ENCODE measurements at regions of chr13 and their contacts with region 1.

Region 1: GRCh38 chr13:99501184-99501847 is at the start of gene TM9SF2:
- DNase-seq: peak; percentile 94
- H3K4me3 ChIP-seq: peak within 1 kb of the TSS; percentile 78 to 93
- H3K27ac ChIP-seq: peak within 1 kb of the TSS; percentile 87 to 91
- H3K4me1 ChIP-seq: peaks cover 5% of the 10 kb centered on the region
- H3K27me3 ChIP-seq: no peaks in the 10 kb centered on the region
- CTCF ChIP-seq: no peak
- POLR2A ChIP-seq: peak; percentile 61
- total RNA-seq, gene TM9SF2: 136 to 175 TPM

Region 2: GRCh38 chr13:99442273-99442895 is 58.9 kb before region 1 on chr13:
- intact Hi-C with region 1: loop called (anchors 2 kb)
- DNase-seq: peak; percentile 40
- H3K4me3 ChIP-seq: no peak overlapping the region
- H3K27ac ChIP-seq: no peak overlapping the region
- H3K4me1 ChIP-seq: no peaks in the 10 kb centered on the region
- H3K27me3 ChIP-seq: peaks cover 2% of the 10 kb centered on the region
- CTCF ChIP-seq: peak; percentile 85 to 93 (median 88)
- POLR2A ChIP-seq: no peak

Region 3: DNA sequence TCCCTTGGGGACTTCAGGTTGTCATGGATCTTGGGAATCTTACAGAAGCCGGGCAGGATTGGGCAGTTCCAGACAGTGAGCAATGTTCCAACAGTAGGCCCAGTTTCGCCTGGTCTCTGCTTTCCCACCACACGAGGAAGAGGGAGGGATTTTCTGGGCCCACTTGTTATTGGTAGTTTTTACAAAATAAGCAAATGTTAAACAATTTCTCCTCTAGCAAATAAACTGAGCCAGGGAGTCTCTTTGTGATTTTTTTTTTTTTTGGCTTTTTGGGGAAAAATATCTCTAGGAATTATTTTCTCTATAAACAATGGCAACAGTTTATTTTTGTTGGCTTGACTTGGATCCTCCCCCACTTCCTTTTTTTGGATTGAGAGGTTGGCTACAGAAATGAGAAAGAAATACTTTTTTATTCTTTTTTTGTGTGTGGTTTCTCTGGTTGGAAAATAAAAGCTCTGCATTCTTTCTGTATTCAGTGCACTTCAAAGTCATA is 89.2 kb after region 1 on chr13:
- intact Hi-C with region 1: no loop called
- DNase-seq: no peak
- H3K4me3 ChIP-seq: no peak overlapping the region
- H3K27ac ChIP-seq: no peak overlapping the region
- H3K4me1 ChIP-seq: no peaks in the 10 kb centered on the region
- H3K27me3 ChIP-seq: no peaks in the 10 kb centered on the region
- CTCF ChIP-seq: no peak
- POLR2A ChIP-seq: no peak

Region 4: GRCh38 chr13:99606324-99607066 is 105.2 kb after region 1 on chr13:
- intact Hi-C with region 1: loop called (anchors 5 kb)
- DNase-seq: peak; percentile 87
- H3K4me3 ChIP-seq: peak within 1 kb of the TSS; percentile 56 to 72
- H3K27ac ChIP-seq: peak within 1 kb of the TSS; percentile 72 to 76
- H3K4me1 ChIP-seq: no peaks in the 10 kb centered on the region
- H3K27me3 ChIP-seq: no peaks in the 10 kb centered on the region
- CTCF ChIP-seq: peak in 2 of 4 experiments; percentile 22 to 29
- POLR2A ChIP-seq: peak; percentile 74

Measured in prostate gland (tissue), 2 donors.